ENCODE measurements at regions of chr6 and their contacts with region 1.

Region 1: GRCh38 chr6:34757687-34758274 is 476 bp downstream of the SNRPC start:
- DNase-seq: no peak
- H3K4me3 ChIP-seq: peak overlapping the region; percentile 72 to 85 (median 77)
- H3K27ac ChIP-seq: peak overlapping the region; percentile 91 to 97 (median 93)
- H3K4me1 ChIP-seq: peaks cover 17 to 31% (median 19%) of the 10 kb centered on the region in 4 donors
- H3K27me3 ChIP-seq: no peaks in the 10 kb centered on the region
- CTCF ChIP-seq: no peak
- EP300 ChIP-seq: no peak
- POLR2A ChIP-seq: no peak

Region 2: GRCh38 chr6:34696739-34697543 is 60.8 kb before region 1 on chr6 and contains the start of gene ILRUN:
- intact Hi-C with region 1: loop called (anchors 5 kb)
- DNase-seq: peak; percentile 99
- H3K4me3 ChIP-seq: peak within 1 kb of the TSS; percentile 82 to 100 (median 88)
- H3K27ac ChIP-seq: peak within 1 kb of the TSS; percentile 92 to 98 (median 97)
- H3K4me1 ChIP-seq: peaks cover 27 to 50% (median 44%) of the 10 kb centered on the region in 4 donors
- H3K27me3 ChIP-seq: no peaks in the 10 kb centered on the region
- CTCF ChIP-seq: no peak
- EP300 ChIP-seq: no peak
- POLR2A ChIP-seq: peak; percentile 67
- total RNA-seq, gene ILRUN: 88.8 to 109 (median 104) TPM

Region 3: GRCh38 chr6:34717466-34717865 is 40.3 kb before region 1 on chr6:
- intact Hi-C with region 1: no loop called
- DNase-seq: no peak
- H3K4me3 ChIP-seq: no peak overlapping the region
- H3K27ac ChIP-seq: no peak overlapping the region
- H3K4me1 ChIP-seq: no peaks in the 10 kb centered on the region
- H3K27me3 ChIP-seq: no peaks in the 10 kb centered on the region
- CTCF ChIP-seq: no peak
- EP300 ChIP-seq: no peak
- POLR2A ChIP-seq: no peak

Region 4: DNA sequence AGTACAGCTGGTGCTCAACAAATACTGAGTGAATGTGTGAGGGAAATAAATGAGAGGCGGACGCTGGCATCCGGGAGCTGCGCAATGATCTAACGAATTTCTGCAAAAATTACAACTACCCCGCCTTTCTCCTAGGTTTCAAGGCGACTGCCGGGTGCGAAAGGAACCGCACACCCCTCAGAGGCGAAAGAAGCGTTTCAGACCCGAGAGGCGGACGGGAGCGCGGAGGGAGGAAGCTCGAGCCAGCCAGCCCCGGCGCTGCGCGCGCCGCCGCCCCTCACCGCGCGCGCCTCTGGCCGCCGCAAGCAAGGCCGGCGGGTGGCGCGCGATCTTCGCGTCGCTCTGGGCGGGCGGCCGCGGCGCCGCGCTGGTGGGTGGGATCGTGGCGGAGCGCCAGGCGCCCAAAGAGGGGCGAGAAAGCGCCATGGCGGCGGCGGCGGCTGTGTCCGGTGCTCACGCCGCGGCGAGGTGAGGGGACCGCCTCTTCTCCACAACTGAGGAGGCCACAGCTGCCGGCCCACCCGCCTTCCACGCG is 34.0 kb after region 1 on chr6 and contains the start of gene BLTP3A:
- intact Hi-C with region 1: loop called (anchors 5 kb)
- DNase-seq: peak; percentile 92
- H3K4me3 ChIP-seq: peak within 1 kb of the TSS; percentile 82 to 94 (median 87)
- H3K27ac ChIP-seq: peak within 1 kb of the TSS; percentile 90 to 97 (median 93)
- H3K4me1 ChIP-seq: peaks cover 19 to 32% (median 20%) of the 10 kb centered on the region in 4 donors
- H3K27me3 ChIP-seq: no peaks in the 10 kb centered on the region
- CTCF ChIP-seq: peak in 1 of 3 experiments; percentile 23
- EP300 ChIP-seq: no peak
- POLR2A ChIP-seq: no peak
- total RNA-seq, gene BLTP3A: 7.5 to 13.1 (median 9.8) TPM

Region 5: DNA sequence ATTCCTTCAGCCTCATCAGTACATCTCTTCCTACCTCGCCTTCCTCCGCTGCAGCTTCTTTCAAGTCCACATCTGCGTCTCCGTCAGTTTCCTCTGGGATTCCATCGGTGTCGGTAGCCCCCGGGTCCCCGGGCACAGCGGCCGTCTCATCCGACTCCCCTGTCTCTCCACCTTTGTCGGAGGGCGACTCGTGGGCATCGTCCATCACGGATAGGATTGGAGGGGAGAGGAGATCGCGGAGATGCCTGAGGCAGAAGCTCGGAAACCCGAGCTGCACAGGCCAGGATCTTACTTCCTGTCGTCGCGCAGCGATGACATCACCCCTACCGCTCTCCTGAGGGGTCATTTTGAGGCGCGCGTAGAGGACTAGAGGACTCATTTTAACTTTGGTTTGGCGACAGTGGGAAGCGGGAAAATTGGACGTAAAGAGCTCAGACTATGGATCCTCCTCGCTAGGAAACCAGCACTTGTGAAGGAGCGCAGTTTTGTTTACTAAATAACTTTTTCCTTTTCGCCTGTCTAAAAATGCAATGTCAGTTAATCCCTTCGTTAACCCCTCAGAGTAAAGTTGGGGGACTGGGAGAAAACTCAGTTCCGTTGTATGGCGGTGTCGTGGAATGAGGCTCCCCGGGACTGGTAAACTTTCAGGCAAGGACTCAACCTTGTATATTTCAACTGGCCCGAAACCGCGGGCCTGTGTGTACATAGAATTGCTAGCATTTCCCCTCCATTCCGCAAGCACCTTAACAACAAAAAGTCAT is 130.2 kb after region 1 on chr6 and contains the start of gene TAF11:
- intact Hi-C with region 1: loop called (anchors 5 kb)
- DNase-seq: peak; percentile 98
- H3K4me3 ChIP-seq: peak within 1 kb of the TSS; percentile 75 to 86 (median 78)
- H3K27ac ChIP-seq: peak within 1 kb of the TSS; percentile 85 to 92 (median 90)
- H3K4me1 ChIP-seq: peaks cover 21 to 60% (median 40%) of the 10 kb centered on the region in 4 donors
- H3K27me3 ChIP-seq: no peaks in the 10 kb centered on the region
- CTCF ChIP-seq: peak in 1 of 3 experiments; percentile 31
- EP300 ChIP-seq: no peak
- POLR2A ChIP-seq: peak; percentile 53
- total RNA-seq, gene TAF11: 18.2 to 26.2 (median 25.4) TPM

Measured in esophagus muscularis mucosa (tissue), 4 donors.